ENCODE measurements at regions of chr6 and their contacts with region 1.

Region 1: DNA sequence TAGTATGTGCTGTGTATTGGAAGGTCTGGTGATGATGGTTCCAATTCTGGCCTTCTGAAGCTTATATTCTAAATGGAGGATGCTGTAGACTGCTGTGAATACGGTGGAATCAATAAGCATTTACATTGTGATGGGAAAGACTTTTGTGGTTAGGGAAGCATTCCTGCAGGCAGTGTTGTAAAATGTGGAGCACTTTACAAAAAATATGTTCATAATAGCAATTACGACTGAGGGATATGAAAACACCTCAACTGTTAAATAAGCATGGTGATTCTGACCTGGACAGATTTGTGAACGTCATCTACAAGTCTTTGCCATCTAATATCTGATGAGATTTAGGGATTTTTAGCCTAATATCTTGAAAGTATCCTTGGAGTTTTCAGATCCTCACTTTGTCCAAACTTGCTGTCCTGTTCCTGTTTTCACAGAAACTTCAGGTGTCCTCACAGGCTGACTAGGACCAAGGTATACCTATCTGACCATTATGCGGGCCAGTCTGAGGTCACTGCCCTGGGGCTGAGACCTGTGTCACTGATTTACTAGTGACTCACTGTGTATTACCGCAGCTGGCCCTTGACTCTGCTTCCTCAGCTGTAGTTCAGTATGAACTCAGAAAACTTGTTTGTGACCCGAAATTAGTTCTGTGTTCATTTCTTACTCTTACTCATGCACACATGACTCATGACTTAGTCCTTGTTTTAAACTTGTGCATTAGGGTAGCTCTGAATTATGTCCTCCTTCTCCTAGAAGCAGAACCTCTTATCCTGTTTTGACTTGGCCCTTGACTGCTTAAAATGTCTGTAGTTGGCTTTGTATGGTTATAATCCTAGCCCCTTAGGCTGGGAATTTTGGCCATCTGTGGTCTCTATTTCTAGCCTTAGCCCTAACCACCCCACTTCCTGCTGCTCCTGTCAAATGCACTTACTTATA is 343.0 kb downstream of the CDKAL1 start:
- DNase-seq: peak; percentile 82 to 89
- H3K4me3 ChIP-seq: no peak overlapping the region
- H3K4me3 Mint-ChIP-seq: peak overlapping the region; percentile 51
- H3K27ac Mint-ChIP-seq: peak overlapping the region; percentile 92
- H3K4me1 ChIP-seq: peaks cover 41% of the 10 kb centered on the region
- H3K4me1 Mint-ChIP-seq: peaks cover 33% of the 10 kb centered on the region
- H3K27me3 ChIP-seq: no peaks in the 10 kb centered on the region
- H3K27me3 Mint-ChIP-seq: no peaks in the 10 kb centered on the region
- CTCF ChIP-seq: no peak

Region 2: DNA sequence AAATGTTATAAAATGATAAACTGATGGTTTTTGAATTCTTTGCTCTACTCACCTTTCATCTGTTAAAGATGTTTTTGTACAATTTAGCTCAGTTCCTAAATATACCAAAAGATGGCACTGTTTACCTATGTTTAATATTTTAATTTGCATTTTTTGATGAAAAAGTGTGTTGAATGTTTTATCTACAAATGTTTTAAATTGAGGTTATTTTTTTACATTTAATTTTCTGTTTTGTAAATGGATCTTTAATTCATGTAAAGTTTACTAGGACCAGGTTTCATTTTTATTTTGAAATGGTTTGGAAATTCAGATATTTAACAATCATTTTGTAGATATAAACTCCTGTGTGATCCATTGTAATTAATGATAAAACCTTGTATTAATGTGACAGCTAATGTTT is 313.0 kb before region 1 on chr6:
- CTCF ChIA-PET with region 1: no interaction called
- POLR2A ChIA-PET with region 1: no interaction called
- intact Hi-C with region 1: loop called (anchors 10 kb)
- DNase-seq: no peak
- H3K4me3 ChIP-seq: no peak overlapping the region
- H3K4me3 Mint-ChIP-seq: no peak overlapping the region
- H3K27ac Mint-ChIP-seq: no peak overlapping the region
- H3K4me1 ChIP-seq: no peaks in the 10 kb centered on the region
- H3K4me1 Mint-ChIP-seq: no peaks in the 10 kb centered on the region
- H3K27me3 ChIP-seq: no peaks in the 10 kb centered on the region
- H3K27me3 Mint-ChIP-seq: no peaks in the 10 kb centered on the region
- CTCF ChIP-seq: peak; percentile 10 to 51

Region 3: GRCh38 chr6:20843826-20844225 is 33.4 kb before region 1 on chr6:
- CTCF ChIA-PET with region 1: no interaction called
- POLR2A ChIA-PET with region 1: no interaction called
- intact Hi-C with region 1: loop called (anchors 1 kb)
- DNase-seq: no peak
- H3K4me3 ChIP-seq: no peak overlapping the region
- H3K4me3 Mint-ChIP-seq: no peak overlapping the region
- H3K27ac Mint-ChIP-seq: no peak overlapping the region
- H3K4me1 ChIP-seq: peaks cover 7% of the 10 kb centered on the region
- H3K4me1 Mint-ChIP-seq: peaks cover 21% of the 10 kb centered on the region
- H3K27me3 ChIP-seq: no peaks in the 10 kb centered on the region
- H3K27me3 Mint-ChIP-seq: no peaks in the 10 kb centered on the region
- CTCF ChIP-seq: no peak

Region 4: DNA sequence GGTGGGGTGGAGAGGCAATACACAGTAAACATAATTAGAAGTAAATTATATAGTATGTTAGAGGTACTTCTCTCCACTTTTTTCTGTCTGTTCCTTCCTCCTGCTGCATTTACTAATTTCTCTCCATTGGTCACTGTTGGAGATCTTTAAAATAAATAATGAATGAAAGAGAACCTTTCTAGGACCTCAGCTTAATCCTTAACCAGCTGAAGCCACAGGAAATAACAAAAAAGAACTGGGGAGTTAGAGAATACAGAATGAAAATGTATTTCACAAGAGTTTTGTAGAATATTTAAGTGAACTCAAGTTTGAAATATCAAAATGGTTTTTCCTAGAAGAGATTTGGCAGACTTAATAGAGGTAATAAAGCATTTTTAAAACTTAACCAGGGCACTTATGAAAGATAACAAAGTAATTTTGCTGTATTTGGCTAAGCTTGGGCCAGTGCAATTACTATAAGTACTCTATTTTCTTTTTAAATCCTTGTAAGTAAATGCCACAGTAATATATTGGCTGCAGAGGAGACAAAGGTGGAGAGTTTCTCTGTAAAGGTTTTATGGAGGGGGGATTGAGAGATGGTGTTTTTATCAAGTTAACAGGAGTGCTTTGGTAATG is 62.0 kb after region 1 on chr6:
- CTCF ChIA-PET with region 1: no interaction called
- POLR2A ChIA-PET with region 1: no interaction called
- intact Hi-C with region 1: no loop called
- DNase-seq: no peak
- H3K4me3 ChIP-seq: no peak overlapping the region
- H3K4me3 Mint-ChIP-seq: no peak overlapping the region
- H3K27ac Mint-ChIP-seq: no peak overlapping the region
- H3K4me1 ChIP-seq: no peaks in the 10 kb centered on the region
- H3K4me1 Mint-ChIP-seq: peaks cover 8% of the 10 kb centered on the region
- H3K27me3 ChIP-seq: no peaks in the 10 kb centered on the region
- H3K27me3 Mint-ChIP-seq: no peaks in the 10 kb centered on the region
- CTCF ChIP-seq: no peak

Region 5: GRCh38 chr6:21003780-21004541 is 126.7 kb after region 1 on chr6:
- CTCF ChIA-PET with region 1: no interaction called
- POLR2A ChIA-PET with region 1: no interaction called
- intact Hi-C with region 1: loop called (anchors 5 kb)
- DNase-seq: peak in 1 of 2 experiments; percentile 36
- H3K4me3 ChIP-seq: no peak overlapping the region
- H3K4me3 Mint-ChIP-seq: no peak overlapping the region
- H3K27ac Mint-ChIP-seq: peak overlapping the region; percentile 7
- H3K4me1 ChIP-seq: peaks cover 20% of the 10 kb centered on the region
- H3K4me1 Mint-ChIP-seq: peaks cover 18% of the 10 kb centered on the region
- H3K27me3 ChIP-seq: no peaks in the 10 kb centered on the region
- H3K27me3 Mint-ChIP-seq: no peaks in the 10 kb centered on the region
- CTCF ChIP-seq: no peak

Measured in Caco-2 (cell line).